Right ventricle myocardium inferior (tissue), 1 donor: ENCODE measurements at regions of chr7 and their contacts with region 1.

Region 1: GRCh38 chr7:22854158-22855048 is 31.8 kb upstream of the TOMM7 start:
- DNase-seq: peak; percentile 93
- ATAC-seq: peak; percentile 95

Region 2: DNA sequence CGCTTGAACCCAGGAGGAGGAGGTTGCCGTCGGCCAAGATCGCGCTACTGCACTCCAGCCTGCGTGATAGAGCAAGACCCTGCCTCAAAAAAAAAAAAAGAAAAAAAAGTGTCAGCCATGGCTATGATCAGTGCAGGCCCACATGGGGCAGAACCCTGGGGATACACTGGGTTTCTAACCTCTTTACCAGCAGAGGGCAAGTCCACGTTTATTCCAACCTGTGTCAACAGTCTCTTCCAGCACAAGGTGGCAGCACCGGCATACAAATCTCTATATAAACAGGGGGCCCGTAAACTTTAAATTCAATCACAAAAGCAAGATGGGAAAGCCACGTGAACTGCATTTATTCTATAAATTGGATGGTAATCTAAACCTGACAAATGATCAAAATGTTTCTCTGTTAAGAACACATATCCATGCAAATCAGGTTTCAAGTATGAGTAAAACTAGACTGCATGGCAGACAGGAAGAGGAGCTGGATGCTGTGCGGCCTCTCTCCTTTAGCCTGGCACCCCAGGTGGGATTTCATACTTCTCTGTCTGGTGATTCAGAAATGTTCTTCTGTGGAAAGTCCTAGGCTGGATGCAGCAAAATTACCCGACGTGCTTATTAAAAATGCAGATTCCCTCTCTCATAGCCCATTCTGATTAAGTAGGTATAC is 294.4 kb before region 1 on chr7:
- intact Hi-C with region 1: loop called (anchors 5 kb)
- DNase-seq: peak; percentile 79
- ATAC-seq: peak; percentile 73

Region 3: DNA sequence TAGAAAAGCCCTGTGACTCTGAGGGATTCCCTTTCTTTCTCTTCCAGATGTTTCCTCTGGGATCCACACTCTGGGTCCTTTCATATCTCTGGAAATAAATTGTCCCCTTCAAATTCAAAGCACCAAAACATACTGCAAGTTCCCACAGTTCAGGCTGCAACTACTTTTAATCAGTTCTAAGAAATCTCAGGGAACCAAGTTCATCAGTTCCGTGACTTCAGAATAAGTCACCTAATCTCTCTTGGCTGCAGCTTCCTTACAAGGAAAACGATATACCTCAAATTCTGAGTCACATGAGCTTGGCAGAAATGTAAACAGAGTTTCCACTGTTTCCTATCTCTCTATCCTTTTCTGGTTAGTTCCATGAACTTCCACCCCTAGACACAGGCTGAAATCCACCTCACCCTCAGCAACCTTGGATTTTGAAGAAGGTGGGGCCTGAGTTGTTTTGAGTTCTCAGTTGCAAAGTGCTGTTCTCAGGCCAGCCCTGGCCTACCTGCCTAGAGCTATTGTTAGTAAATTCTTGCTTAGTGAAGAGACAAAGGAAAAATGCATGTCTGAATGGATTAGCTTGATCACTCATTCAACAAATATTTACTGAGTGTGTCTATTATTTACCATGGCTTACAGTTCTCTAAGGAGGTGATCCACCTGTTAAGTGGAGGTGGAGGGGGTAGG is 186.7 kb before region 1 on chr7:
- intact Hi-C with region 1: no loop called
- DNase-seq: no peak
- ATAC-seq: no peak

Region 4: GRCh38 chr7:22726345-22727185 is 127.8 kb before region 1 on chr7:
- intact Hi-C with region 1: loop called (anchors 10 kb)
- DNase-seq: peak; percentile 67
- ATAC-seq: peak; percentile 52

Region 5: DNA sequence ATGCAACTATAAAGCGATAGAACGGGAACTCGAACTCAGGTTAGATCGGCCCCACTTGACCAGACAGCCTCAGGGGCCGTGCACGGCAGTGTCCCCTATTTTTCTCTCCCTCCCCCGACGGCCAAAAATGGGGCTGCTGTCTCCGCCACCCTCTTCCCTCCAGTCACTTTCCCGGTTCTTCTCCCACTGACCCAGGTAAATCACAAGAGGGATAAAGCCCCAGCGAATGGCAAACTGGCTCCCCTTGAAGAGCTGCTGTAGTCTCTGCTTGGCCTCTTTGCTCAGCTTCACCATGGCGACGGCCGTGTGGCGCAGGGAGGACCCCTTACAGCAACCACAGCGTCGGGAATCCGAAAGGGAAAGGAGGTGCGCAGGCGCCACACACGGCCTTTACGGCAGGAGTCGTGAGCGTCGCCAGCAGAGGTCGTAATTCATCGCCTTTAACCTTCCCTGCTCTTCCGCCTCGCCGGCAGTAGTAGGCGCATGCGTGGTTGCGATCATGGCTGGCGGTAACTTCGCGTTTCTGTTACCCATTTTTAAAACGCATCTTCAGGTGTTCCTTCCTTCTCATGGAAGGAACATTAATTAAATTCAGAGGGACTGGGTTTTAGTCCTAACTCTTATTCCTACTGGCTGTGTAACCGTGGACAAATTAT is 31.8 kb before region 1 on chr7 and contains the start of gene TOMM7:
- intact Hi-C with region 1: loop called (anchors 2 kb)
- DNase-seq: peak; percentile 93
- ATAC-seq: peak; percentile 98
- total RNA-seq, gene TOMM7: 650 TPM

Region 6: DNA sequence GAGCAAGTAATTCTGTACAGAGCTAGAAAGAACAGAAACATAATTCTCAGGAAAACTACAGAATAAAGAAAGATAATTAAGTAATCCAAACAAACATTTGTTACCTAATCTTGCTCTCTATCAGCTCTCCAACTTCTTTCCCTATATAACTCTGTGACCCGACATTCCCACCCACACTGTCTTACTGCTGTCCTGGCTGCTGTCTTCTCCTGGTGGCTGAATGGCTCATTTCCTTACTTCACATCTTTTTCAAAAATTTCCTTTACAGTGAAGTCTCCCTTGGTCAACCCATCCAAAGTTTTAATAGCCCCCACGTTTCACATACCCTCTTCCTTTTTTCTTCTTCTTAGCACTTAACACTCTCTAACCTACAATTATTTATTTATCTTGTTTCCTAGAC is 95.5 kb after region 1 on chr7:
- intact Hi-C with region 1: loop called (anchors 5 kb)
- DNase-seq: no peak
- ATAC-seq: no peak

Region 7: GRCh38 chr7:23013715-23014649 is 159.6 kb after region 1 on chr7 and contains the start of gene HYCC1:
- intact Hi-C with region 1: loop called (anchors 2 kb)
- DNase-seq: peak; percentile 99
- ATAC-seq: peak; percentile 100
- total RNA-seq, gene HYCC1: 40.8 TPM

Region 8: GRCh38 chr7:23055582-23056178 is 201.3 kb after region 1 on chr7:
- intact Hi-C with region 1: loop called (anchors 2 kb)
- DNase-seq: no peak
- ATAC-seq: peak; percentile 67